Activated CD4-positive, alpha-beta T cell treated with anti-CD3 and anti-CD28 coated beads, Interleukin-2, amount 10 ng/mL, durations not matched to agents 24 days and 14 days (primary cell): ENCODE measurements at regions of chr11 and their contacts with region 1.

Region 1: GRCh38 chr11:3091791-3092602 is 34.8 kb upstream of the CARS1 start:
- DNase-seq: peak; percentile 92
- H3K4me3 Mint-ChIP-seq: no peak overlapping the region
- H3K27ac Mint-ChIP-seq: no peak overlapping the region
- H3K4me1 Mint-ChIP-seq: peaks cover 4% of the 10 kb centered on the region
- H3K27me3 Mint-ChIP-seq: peaks cover 7% of the 10 kb centered on the region

Region 2: GRCh38 chr11:2440646-2441045 is 651.4 kb before region 1 on chr11:
- intact Hi-C with region 1: no loop called
- DNase-seq: no peak
- H3K4me3 Mint-ChIP-seq: no peak overlapping the region
- H3K27ac Mint-ChIP-seq: no peak overlapping the region
- H3K4me1 Mint-ChIP-seq: peaks cover 3% of the 10 kb centered on the region
- H3K27me3 Mint-ChIP-seq: peaks cover 37% of the 10 kb centered on the region

Region 3: GRCh38 chr11:2752195-2752790 is 339.7 kb before region 1 on chr11:
- intact Hi-C with region 1: no loop called
- DNase-seq: no peak
- H3K4me3 Mint-ChIP-seq: no peak overlapping the region
- H3K27ac Mint-ChIP-seq: no peak overlapping the region
- H3K4me1 Mint-ChIP-seq: no peaks in the 10 kb centered on the region
- H3K27me3 Mint-ChIP-seq: no peaks in the 10 kb centered on the region

Region 4: DNA sequence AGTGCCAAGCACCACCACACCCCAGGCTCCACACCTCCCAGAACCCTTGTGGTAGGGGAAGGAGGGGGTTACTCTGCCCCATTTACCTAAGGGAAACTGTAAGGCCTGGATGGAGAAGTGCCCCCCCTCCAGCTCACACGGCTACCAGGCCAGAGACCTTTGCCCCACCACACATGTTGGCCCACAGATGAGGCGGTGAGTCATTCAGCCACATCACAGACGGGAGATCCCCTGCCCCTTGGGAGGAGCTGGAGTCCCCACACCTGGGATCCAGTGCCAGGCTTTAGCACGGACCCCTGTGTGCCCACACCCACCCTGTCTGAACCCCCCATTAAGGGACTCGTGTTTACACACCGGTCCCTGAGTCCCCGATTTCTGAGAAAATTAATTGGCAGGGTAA is 231.4 kb before region 1 on chr11:
- intact Hi-C with region 1: no loop called
- DNase-seq: no peak
- H3K4me3 Mint-ChIP-seq: no peak overlapping the region
- H3K27ac Mint-ChIP-seq: no peak overlapping the region
- H3K4me1 Mint-ChIP-seq: no peaks in the 10 kb centered on the region
- H3K27me3 Mint-ChIP-seq: peaks cover 34% of the 10 kb centered on the region

Region 5: GRCh38 chr11:2892215-2893020 is 199.6 kb before region 1 on chr11:
- intact Hi-C with region 1: loop called (anchors 5 kb)
- DNase-seq: peak; percentile 90
- H3K4me3 Mint-ChIP-seq: peak overlapping the region; percentile 90
- H3K27ac Mint-ChIP-seq: peak overlapping the region; percentile 80
- H3K4me1 Mint-ChIP-seq: peaks cover 12% of the 10 kb centered on the region
- H3K27me3 Mint-ChIP-seq: peaks cover under 1% of the 10 kb centered on the region

Region 6: GRCh38 chr11:2992234-2992996 is 99.6 kb before region 1 on chr11 and contains the start of gene NAP1L4:
- intact Hi-C with region 1: no loop called
- DNase-seq: peak; percentile 99
- H3K4me3 Mint-ChIP-seq: peak within 1 kb of the TSS; percentile 98
- H3K27ac Mint-ChIP-seq: peak within 1 kb of the TSS; percentile 99
- H3K4me1 Mint-ChIP-seq: peaks cover 30% of the 10 kb centered on the region
- H3K27me3 Mint-ChIP-seq: no peaks in the 10 kb centered on the region
- total RNA-seq, gene NAP1L4: 263 and 272 TPM in 2 replicates

Region 7: GRCh38 chr11:3037040-3037944 is 54.7 kb before region 1 on chr11:
- intact Hi-C with region 1: loop called (anchors 1 kb)
- DNase-seq: peak; percentile 82
- H3K4me3 Mint-ChIP-seq: no peak overlapping the region
- H3K27ac Mint-ChIP-seq: peak overlapping the region; percentile 37
- H3K4me1 Mint-ChIP-seq: peaks cover 20% of the 10 kb centered on the region
- H3K27me3 Mint-ChIP-seq: no peaks in the 10 kb centered on the region